Activated CD8-positive, alpha-beta T cell treated with anti-CD3 and anti-CD28 coated beads for 36 hours (primary cell): ENCODE measurements at regions of chr5 and their contacts with region 1.

Region 1: GRCh38 chr5:40688127-40688761 is 8.5 kb downstream of the PTGER4 start:
- DNase-seq: peak; percentile 95
- ATAC-seq: peak; percentile 70
- H3K4me3 Mint-ChIP-seq: peak overlapping the region; percentile 99
- H3K27ac Mint-ChIP-seq: peak overlapping the region; percentile 88
- H3K4me1 Mint-ChIP-seq: peaks cover 62% of the 10 kb centered on the region
- H3K27me3 Mint-ChIP-seq: no peaks in the 10 kb centered on the region
- CTCF ChIP-seq: peak; percentile 81

Region 2: DNA sequence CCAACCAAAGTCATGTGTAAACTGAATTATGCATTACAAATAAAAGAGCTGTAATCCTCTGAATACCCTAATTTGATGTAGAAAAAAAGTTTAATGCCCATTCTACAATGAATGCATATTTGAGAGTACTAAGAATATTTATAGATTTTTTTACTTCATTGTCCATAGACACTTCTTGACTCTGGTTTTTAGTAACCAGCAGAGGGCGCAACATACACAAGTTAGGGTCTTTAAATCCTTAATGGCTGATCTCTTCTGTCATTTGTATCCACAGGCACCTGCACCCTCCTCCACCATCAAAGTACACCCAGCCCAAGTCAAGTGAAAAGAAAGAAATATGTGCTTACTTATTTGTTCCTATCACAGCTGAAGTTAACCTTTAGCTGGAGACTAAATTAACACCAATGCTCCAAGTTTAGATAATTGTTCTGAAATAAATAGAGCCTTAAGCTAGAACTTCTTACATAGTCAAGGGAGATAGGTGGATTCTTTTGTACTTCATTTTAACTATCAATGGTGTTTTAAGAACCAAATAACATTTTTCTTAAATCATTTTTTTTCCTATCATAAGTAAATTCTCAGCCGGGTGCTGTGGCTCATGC is 739.3 kb before region 1 on chr5:
- CTCF ChIA-PET with region 1: interaction called, 8 read pairs
- POLR2A ChIA-PET with region 1: no interaction called
- intact Hi-C with region 1: loop called (anchors 2 kb)
- DNase-seq: peak; percentile 74
- ATAC-seq: peak; percentile 83
- H3K4me3 Mint-ChIP-seq: no peak overlapping the region
- H3K27ac Mint-ChIP-seq: no peak overlapping the region
- H3K4me1 Mint-ChIP-seq: peaks cover 3% of the 10 kb centered on the region
- H3K27me3 Mint-ChIP-seq: no peaks in the 10 kb centered on the region
- CTCF ChIP-seq: peak; percentile 62

Region 3: GRCh38 chr5:40223884-40224402 is 464.3 kb before region 1 on chr5:
- CTCF ChIA-PET with region 1: no interaction called
- POLR2A ChIA-PET with region 1: no interaction called
- intact Hi-C with region 1: loop called (anchors 5 kb)
- DNase-seq: peak; percentile 65
- ATAC-seq: peak; percentile 90
- H3K4me3 Mint-ChIP-seq: peak overlapping the region; percentile 14
- H3K27ac Mint-ChIP-seq: peak overlapping the region; percentile 82
- H3K4me1 Mint-ChIP-seq: peaks cover 51% of the 10 kb centered on the region
- H3K27me3 Mint-ChIP-seq: peaks cover 1% of the 10 kb centered on the region
- CTCF ChIP-seq: no peak

Region 4: GRCh38 chr5:40386289-40386688 is 302.0 kb before region 1 on chr5:
- CTCF ChIA-PET with region 1: no interaction called
- POLR2A ChIA-PET with region 1: interaction called, 6 read pairs
- intact Hi-C with region 1: loop called (anchors 5 kb)
- DNase-seq: peak; percentile 60
- ATAC-seq: peak; percentile 31
- H3K4me3 Mint-ChIP-seq: no peak overlapping the region
- H3K27ac Mint-ChIP-seq: no peak overlapping the region
- H3K4me1 Mint-ChIP-seq: peaks cover 81% of the 10 kb centered on the region
- H3K27me3 Mint-ChIP-seq: no peaks in the 10 kb centered on the region
- CTCF ChIP-seq: no peak

Region 5: GRCh38 chr5:40736103-40736875 is 48.0 kb after region 1 on chr5:
- CTCF ChIA-PET with region 1: interaction called, 6 read pairs
- POLR2A ChIA-PET with region 1: interaction called, 3 read pairs
- intact Hi-C with region 1: loop called (anchors 5 kb)
- DNase-seq: no peak
- ATAC-seq: peak; percentile 77
- H3K4me3 Mint-ChIP-seq: no peak overlapping the region
- H3K27ac Mint-ChIP-seq: no peak overlapping the region
- H3K4me1 Mint-ChIP-seq: peaks cover 27% of the 10 kb centered on the region
- H3K27me3 Mint-ChIP-seq: no peaks in the 10 kb centered on the region
- CTCF ChIP-seq: peak; percentile 80

Region 6: DNA sequence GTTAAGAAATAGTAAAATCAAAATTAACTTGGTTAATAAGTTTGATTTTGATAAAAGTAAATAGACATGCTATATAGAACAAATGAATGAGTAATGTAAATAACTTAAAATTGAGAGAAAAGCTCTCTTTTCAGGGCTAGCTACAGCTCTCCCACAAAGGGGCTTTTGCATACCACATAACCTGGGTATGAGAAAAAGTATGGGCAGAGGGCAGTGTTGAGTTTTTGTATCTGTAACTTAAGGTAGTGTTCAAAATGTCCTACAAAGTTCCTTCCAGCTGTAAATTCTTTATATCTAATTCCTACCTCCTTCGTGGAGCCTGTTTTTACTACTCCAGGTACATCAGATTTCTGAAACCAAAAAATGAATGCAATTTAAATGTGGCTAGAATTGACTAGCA is 86.4 kb after region 1 on chr5:
- CTCF ChIA-PET with region 1: no interaction called
- POLR2A ChIA-PET with region 1: no interaction called
- intact Hi-C with region 1: no loop called
- DNase-seq: no peak
- ATAC-seq: no peak
- H3K4me3 Mint-ChIP-seq: no peak overlapping the region
- H3K27ac Mint-ChIP-seq: no peak overlapping the region
- H3K4me1 Mint-ChIP-seq: peaks cover 15% of the 10 kb centered on the region
- H3K27me3 Mint-ChIP-seq: no peaks in the 10 kb centered on the region
- CTCF ChIP-seq: no peak